Left cardiac atrium (tissue), 4 donors: ENCODE measurements at regions of chr4 and their contacts with region 1.

Region 1: GRCh38 chr4:140359562-140360427 is 13.7 kb upstream of the SCOC start:
- DNase-seq: peak; percentile 78
- ATAC-seq: peak; percentile 82 to 84

Region 2: DNA sequence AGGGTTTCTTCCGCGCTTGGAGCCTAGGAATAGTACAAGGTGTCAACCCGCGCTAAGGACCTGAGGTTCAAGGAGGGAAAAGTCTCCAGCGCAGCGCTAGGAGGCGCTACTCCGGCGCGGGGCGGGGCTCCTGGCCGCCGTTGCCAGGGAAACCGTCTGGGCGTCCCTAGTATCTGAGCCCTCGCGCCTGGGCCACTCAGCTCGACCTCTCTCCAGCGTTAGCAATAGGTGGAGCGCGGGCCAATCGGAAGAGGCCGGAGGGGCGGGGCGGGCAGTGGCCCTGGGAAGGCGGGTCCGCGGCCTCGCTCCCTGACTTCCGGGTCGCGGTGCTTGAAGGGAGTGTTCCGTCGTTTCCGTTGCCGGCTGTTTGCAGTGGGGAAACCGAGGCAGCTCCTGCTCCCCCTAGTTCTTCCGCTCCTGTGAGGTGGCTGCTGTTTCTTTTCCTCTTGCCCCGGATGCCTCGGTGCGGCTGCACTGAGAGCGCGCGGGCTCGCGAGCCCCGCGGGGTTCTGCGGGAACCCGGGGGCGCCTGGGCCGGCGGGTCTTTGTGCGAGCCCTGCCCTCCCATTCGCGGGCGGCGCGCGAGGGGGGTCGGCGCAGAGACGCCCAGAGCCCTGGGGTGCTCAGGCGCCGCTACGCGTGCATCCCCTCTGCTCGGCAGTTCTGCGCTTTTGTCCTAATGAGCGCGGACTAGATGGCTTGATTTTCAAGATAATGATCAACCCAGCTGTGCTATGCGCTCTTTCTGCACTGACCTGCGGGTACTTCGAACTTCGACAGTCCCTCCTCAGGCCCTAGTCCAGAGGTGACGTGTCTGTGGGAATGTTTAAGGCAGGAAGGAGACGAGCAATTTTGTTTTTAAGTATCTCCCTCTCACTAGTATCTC is 164.3 kb after region 1 on chr4 and contains the start of gene ELMOD2:
- intact Hi-C with region 1: loop called in 1 of 2 experiments (anchors 10 kb)
- DNase-seq: peak; percentile 99
- ATAC-seq: peak; percentile 100
- total RNA-seq, gene ELMOD2: 16.3 to 18.6 TPM

Region 3: GRCh38 chr4:140609548-140610425 is 250.0 kb after region 1 on chr4:
- intact Hi-C with region 1: loop called (anchors 2 to 5 kb)
- DNase-seq: no peak
- ATAC-seq: peak; percentile 75 to 81

Region 4: GRCh38 chr4:140844061-140844460 is 484.3 kb after region 1 on chr4:
- intact Hi-C with region 1: loop called in 1 of 2 experiments (anchors 2 kb)
- DNase-seq: no peak
- ATAC-seq: no peak